ENCODE measurements at regions of chr3 and their contacts with region 1.

Region 1: DNA sequence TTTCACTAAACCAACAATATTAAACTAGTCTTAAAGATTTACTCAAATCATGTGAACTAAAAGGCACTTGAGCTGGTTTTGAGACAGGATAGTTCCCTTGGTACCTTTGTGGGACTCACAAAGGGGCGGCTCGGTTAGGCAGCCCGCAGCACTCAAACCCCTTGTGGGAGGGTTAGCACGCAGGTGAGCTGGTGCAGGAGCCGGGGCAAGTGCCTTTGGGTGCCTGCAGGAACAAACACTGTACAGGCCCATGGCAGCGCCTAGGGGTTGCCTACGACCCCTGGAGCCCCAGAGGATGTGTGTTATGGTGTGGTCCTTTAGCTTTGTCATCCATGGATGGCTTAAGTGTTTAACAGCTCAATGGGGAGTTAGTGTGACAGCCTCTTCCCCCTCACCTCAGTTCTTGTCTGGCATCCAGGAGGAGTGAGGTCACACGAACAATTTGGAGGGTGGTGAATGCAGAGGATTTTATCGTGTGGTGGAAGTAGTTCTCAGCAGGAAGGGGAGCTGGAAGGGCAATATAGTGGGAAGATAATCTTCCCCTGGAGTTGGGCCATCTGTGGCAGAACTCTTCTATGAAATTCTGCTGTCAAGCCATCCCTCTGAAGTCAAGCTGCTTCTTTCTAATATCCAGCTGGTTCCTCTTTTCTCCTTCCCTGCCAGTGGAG is 470.9 kb downstream of the RBMS3 start:
- DNase-seq: no peak
- ATAC-seq: peak; percentile 86

Region 2: GRCh38 chr3:29324180-29324651 is 427.6 kb before region 1 on chr3:
- intact Hi-C with region 1: no loop called
- DNase-seq: peak; percentile 50
- ATAC-seq: peak; percentile 68

Region 3: DNA sequence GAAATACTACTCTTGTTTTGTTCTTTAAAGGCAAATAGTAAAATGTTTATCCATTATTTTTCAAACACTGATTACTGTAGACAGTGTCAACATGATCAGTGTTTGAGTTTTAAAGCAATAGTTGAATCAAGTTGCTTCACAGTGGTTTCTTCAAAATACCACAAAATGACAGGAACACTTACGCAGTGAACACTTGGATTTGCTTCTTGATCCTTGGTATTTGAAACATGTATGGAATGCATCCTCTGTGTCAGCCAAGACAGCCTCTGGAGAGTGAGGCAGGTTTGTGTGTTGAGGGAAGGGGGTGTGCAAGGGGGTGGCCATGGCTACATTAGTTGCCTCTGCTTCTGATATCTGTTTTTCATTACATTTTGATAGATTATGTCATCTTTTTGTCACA is 57.9 kb before region 1 on chr3:
- intact Hi-C with region 1: loop called (anchors 5 kb)
- DNase-seq: no peak
- ATAC-seq: peak; percentile 6